OCI-LY7 (cell line): ENCODE measurements at regions of chr9 and their contacts with region 1.

Region 1: DNA sequence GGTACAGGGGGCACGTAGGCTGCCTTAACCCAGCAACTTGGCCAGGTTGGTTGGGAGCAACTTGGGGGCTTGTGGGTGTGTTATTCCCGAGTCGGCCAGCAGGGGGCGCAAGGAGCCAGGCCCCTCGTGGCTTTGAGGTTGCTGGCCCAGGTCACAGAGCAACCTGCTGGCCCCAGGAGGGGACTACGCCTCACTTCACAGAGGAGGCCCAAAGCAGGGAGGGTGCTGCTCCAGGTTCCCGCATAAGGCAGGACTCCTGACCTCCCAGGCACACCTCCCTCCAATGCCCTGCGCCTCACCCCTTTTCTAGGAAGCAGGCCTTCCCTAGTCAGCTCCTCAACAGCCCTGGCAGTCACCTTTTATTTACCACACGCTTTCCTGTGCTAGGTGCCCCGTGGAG is 18.1 kb downstream of the KYAT1 start:
- DNase-seq: peak; percentile 80
- H3K4me3 ChIP-seq: no peak overlapping the region
- H3K27ac ChIP-seq: no peak overlapping the region
- H3K4me1 ChIP-seq: peaks cover 4% of the 10 kb centered on the region
- CTCF ChIP-seq: peak; percentile 88

Region 2: DNA sequence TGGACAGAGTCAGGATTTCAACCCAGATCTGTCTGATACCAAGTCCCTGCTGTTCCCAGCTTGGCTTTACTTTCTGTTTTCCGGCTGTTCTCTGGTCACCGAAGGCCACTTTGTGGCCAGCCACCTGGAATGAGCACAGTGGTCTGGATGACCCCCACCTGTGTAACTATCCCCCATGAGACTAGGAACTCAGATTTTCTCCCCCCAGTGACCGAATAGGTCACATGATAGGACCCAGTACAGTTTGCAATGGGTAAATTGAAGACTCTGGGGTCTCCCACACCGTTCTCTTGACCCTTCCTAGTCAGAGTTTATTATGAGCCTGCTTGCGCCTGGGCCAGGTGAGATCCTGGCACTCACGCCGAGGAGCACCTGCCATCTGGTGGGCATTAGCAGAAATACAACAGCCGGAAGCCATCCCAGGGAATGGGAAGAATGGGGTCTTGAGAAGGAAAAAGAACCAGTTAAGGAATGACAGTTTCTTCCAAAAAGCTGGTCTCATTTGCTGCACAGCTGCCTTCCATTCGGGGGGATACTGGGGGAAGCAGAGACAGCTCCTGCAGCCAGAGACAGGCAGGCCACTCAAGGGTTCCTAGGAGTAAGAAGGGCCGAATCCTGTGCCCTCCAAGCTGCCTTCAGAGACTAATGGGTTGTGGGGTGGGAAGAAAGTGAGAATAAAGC is 64.2 kb after region 1 on chr9:
- CTCF ChIA-PET with region 1: interaction called, 5 read pairs
- POLR2A ChIA-PET with region 1: interaction called, 6 read pairs
- intact Hi-C with region 1: loop called (anchors 1 kb)
- DNase-seq: peak; percentile 70
- H3K4me3 ChIP-seq: no peak overlapping the region
- H3K27ac ChIP-seq: no peak overlapping the region
- H3K4me1 ChIP-seq: peaks cover 17% of the 10 kb centered on the region
- CTCF ChIP-seq: peak; percentile 95

Region 3: DNA sequence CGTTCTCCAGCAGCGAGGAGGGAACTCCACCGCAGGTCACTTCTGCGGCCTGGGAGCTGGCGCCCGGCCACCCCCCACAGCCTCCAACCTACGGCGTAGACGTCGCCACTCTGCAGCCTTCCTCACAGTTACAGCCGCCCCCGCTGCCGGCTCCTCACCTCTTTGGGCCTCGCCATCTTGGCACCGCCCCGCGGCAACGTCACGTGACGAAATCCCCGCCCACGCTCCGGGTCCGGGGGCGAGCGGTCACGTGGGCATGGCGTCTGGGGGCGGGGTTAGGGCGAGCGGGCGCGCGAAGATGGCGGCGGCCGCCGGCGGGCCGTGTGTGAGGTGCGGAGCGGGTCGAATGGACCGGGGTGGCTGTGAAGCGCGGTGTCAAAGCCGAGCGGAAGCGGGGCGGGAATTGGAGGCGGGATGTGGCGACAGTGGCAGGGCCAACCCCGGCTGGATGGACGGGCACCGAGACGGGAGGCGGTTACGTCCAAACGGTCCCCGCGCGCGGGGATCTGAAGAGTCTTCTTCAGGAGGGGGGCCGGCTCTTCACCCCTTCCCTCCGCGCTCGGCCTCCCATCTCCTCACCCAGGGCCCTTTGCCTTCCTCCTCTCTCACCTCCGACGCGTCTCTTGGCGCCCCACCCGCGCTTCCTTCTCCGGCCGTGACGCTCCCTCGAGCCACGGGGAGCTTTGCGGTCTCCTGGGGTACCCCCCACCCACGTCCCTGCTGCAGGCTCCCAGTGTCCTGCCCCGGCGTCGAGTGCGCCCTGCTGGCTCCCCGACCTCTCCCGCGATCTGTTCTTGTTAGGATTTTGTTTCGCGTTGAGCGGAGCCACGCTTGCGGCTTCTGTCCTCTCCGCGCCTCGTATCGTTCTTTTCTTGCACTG is 84.0 kb after region 1 on chr9 and contains the starts of genes DOLK and NUP188:
- CTCF ChIA-PET with region 1: no interaction called
- POLR2A ChIA-PET with region 1: no interaction called
- intact Hi-C with region 1: loop called (anchors 5 kb)
- DNase-seq: peak; percentile 94
- H3K4me3 ChIP-seq: peak within 1 kb of the TSS; percentile 95
- H3K27ac ChIP-seq: peak within 1 kb of the TSS; percentile 63
- H3K4me1 ChIP-seq: peaks cover 14% of the 10 kb centered on the region
- CTCF ChIP-seq: no peak
- total RNA-seq, gene DOLK: 9.6 and 11.2 TPM in 2 replicates
- total RNA-seq, gene NUP188: 70.5 and 73.6 TPM in 2 replicates

Region 4: GRCh38 chr9:129006328-129007034 is 142.8 kb after region 1 on chr9:
- CTCF ChIA-PET with region 1: no interaction called
- POLR2A ChIA-PET with region 1: no interaction called
- intact Hi-C with region 1: loop called (anchors 5 kb)
- DNase-seq: peak; percentile 75
- H3K4me3 ChIP-seq: no peak overlapping the region
- H3K27ac ChIP-seq: no peak overlapping the region
- H3K4me1 ChIP-seq: no peaks in the 10 kb centered on the region
- CTCF ChIP-seq: peak; percentile 98